Dendritic cell treated with granulocyte-macrophage colony-stimulating factor and Interleukin-4, amounts not matched to agents 40 ng/mL and 50 ng/mL, for 4 days (primary cell): ENCODE measurements at regions of chr1 and their contacts with region 1.

Region 1: DNA sequence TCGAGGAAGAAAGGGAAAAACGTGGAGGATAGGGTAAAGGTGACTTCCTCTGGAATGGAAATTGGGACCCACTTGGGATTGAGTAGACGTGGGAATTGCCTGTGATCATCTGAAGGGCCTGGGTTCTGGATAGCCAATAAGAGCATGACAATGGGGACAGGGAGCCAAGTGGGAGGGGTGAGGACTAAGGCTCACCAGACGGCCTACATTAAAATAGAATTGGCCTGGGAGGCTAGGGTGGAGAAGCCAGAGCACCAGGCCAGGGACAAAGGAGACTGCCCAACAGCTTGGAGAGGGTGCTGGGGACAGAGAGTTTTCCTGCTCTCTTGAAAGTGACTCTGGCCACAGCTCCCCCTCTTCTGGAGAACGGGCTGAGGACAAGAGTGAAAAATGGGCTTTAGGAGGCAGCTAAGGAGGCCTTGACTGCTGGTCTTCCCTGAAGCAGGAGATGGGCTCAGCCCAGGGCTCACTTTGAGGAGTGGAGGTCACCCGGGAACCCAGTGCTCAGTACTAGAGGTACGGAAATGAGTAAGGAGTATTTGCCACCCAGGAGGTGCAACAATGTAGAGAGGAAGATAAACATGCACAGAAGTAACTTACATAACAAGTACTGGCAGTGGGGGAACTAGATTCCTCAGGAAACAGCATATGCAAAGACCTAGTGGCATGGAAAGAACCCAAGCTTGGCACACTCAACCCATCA is 18.8 kb downstream of the INKA2 start:
- H3K4me3 Mint-ChIP-seq: no peak overlapping the region
- H3K27ac Mint-ChIP-seq: peak overlapping the region; percentile 28
- H3K4me1 Mint-ChIP-seq: peaks cover 54% of the 10 kb centered on the region
- H3K27me3 Mint-ChIP-seq: no peaks in the 10 kb centered on the region

Region 2: GRCh38 chr1:111747282-111747734 is 26.9 kb after region 1 on chr1:
- intact Hi-C with region 1: loop called (anchors 1 kb)
- H3K4me3 Mint-ChIP-seq: no peak overlapping the region
- H3K27ac Mint-ChIP-seq: peak overlapping the region; percentile 13
- H3K4me1 Mint-ChIP-seq: peaks cover 39% of the 10 kb centered on the region
- H3K27me3 Mint-ChIP-seq: peaks cover 20% of the 10 kb centered on the region

Region 3: DNA sequence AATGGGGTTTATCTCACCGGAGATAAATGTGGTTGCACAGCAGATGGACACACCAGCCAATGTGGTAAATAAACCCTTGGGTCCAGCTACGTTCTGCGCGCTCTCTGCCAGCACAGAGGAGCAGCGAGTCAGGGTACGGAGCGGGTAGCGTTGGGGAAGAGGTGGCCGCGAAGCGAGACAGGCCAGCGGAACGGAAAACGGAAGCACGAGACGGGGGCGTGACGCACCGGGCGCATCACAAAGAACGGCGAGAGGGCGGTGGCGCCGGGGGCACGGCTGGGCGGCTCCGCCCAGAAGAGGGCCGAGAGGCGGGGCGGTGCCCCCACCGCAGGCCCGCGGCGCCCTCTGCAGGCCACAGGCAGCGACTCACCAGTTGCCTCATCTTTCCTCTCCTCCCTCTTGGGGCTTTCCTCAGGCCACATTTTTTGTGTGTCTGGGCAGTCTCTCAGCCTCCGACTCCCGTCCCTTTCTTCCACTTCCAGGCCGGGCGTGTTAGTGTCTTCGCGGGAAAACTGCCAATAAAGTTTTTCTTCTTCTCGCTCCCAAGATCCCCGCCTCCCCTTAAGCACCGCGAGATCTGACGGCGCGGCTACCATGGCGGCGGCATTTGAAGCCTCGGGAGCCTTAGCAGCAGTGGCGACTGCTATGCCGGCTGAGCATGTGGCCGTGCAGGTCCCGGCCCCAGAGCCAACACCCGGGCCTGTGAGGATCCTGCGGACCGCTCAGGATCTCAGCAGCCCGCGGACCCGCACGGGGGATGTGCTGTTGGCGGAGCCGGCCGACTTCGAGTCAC is 35.1 kb after region 1 on chr1 and contains the start of gene DDX20:
- intact Hi-C with region 1: loop called (anchors 2 kb)
- H3K4me3 Mint-ChIP-seq: peak within 1 kb of the TSS; percentile 95
- H3K27ac Mint-ChIP-seq: peak within 1 kb of the TSS; percentile 94
- H3K4me1 Mint-ChIP-seq: peaks cover 41% of the 10 kb centered on the region
- H3K27me3 Mint-ChIP-seq: no peaks in the 10 kb centered on the region

Region 4: GRCh38 chr1:112855152-112855828 is 1134.9 kb after region 1 on chr1:
- intact Hi-C with region 1: no loop called
- H3K4me3 Mint-ChIP-seq: peak overlapping the region; percentile 60
- H3K27ac Mint-ChIP-seq: peak overlapping the region; percentile 55
- H3K4me1 Mint-ChIP-seq: peaks cover 19% of the 10 kb centered on the region
- H3K27me3 Mint-ChIP-seq: peaks cover 41% of the 10 kb centered on the region